ENCODE measurements at regions of chr17 and their contacts with region 1.

Region 1: GRCh38 chr17:73255671-73256181 is 6.0 kb downstream of the CPSF4L start:
- DNase-seq: peak; percentile 45 to 72
- ATAC-seq: peak; percentile 66 to 88 (median 80)
- H3K4me3 ChIP-seq: no peak overlapping the region
- H3K27ac ChIP-seq: no peak overlapping the region
- H3K4me1 ChIP-seq: no peaks in the 10 kb centered on the region
- H3K27me3 ChIP-seq: no peaks in the 10 kb centered on the region
- CTCF ChIP-seq: peak; percentile 99

Region 2: GRCh38 chr17:73371285-73371684 is 115.6 kb after region 1 on chr17:
- intact Hi-C with region 1: loop called (anchors 1 to 2 kb)
- DNase-seq: no peak
- ATAC-seq: no peak
- H3K4me3 ChIP-seq: no peak overlapping the region
- H3K27ac ChIP-seq: no peak overlapping the region
- H3K4me1 ChIP-seq: no peaks in the 10 kb centered on the region
- H3K27me3 ChIP-seq: peaks cover 0 to 6% (median 0%) of the 10 kb centered on the region in 3 donors
- CTCF ChIP-seq: no peak

Measured in psoas muscle (tissue), 8 donors.